ENCODE measurements at regions of chr2 and their contacts with region 1.

Region 1: DNA sequence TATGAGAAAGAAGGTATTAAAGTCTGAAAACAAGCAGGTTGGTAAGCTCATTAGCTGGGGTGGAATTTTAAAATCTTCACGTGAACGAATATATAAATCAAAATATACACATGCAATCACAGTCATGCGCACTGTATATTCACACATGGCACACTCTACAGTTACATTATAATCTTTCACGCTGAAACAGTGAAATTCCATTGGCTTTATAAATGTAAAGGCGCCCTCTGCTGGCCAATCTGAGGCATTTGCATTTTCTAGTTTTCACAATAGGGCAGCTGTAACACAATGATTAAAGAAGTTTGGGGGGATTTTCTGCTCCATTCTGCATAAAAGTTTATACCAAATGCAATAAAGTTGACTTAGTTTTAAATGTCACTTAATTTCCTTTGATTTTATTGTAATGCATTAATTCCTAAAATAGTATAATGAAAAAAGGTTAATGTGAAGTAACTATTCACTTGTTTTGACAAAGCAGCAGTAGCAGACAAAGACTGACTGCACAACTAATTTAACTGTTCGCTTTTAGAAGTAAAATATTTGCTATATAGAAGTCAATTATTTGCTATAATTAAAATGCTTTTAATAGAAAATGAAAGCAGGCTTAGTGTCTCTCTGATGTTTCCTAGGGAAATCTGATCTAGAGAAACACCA is 17.2 kb downstream of the IFIH1 start:
- DNase-seq: peak; percentile 25
- H3K4me3 Mint-ChIP-seq: no peak overlapping the region
- H3K27ac Mint-ChIP-seq: no peak overlapping the region
- H3K4me1 Mint-ChIP-seq: peaks cover 5% of the 10 kb centered on the region
- H3K27me3 Mint-ChIP-seq: no peaks in the 10 kb centered on the region

Region 2: GRCh38 chr2:161586517-161587167 is 714.6 kb before region 1 on chr2:
- intact Hi-C with region 1: loop called (anchors 1 kb)
- DNase-seq: no peak
- H3K4me3 Mint-ChIP-seq: no peak overlapping the region
- H3K27ac Mint-ChIP-seq: no peak overlapping the region
- H3K4me1 Mint-ChIP-seq: peaks cover 4% of the 10 kb centered on the region
- H3K27me3 Mint-ChIP-seq: peaks cover 26% of the 10 kb centered on the region

Region 3: DNA sequence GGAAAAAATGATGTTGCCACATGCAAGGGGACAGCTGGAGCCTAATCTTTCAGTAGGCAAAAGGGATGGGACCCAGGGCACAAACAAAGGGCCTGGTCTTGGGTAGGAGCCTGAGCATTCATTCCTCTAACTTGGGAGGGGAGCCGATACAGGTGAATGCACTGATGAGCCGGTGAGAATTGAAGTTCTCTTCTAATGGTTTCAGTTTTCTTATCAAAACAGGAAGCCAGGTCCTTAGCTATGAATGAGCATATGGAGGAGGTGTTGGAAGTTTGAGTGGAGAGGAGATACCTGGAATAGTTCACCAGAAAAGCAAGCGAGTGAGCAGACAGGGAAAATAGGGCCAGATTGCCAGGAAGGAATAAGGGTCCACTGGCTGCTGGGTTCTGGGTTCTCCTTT is 237.4 kb before region 1 on chr2:
- intact Hi-C with region 1: no loop called
- DNase-seq: no peak
- H3K4me3 Mint-ChIP-seq: peak overlapping the region; percentile 77
- H3K27ac Mint-ChIP-seq: peak overlapping the region; percentile 94
- H3K4me1 Mint-ChIP-seq: peaks cover 91% of the 10 kb centered on the region
- H3K27me3 Mint-ChIP-seq: no peaks in the 10 kb centered on the region

Region 4: DNA sequence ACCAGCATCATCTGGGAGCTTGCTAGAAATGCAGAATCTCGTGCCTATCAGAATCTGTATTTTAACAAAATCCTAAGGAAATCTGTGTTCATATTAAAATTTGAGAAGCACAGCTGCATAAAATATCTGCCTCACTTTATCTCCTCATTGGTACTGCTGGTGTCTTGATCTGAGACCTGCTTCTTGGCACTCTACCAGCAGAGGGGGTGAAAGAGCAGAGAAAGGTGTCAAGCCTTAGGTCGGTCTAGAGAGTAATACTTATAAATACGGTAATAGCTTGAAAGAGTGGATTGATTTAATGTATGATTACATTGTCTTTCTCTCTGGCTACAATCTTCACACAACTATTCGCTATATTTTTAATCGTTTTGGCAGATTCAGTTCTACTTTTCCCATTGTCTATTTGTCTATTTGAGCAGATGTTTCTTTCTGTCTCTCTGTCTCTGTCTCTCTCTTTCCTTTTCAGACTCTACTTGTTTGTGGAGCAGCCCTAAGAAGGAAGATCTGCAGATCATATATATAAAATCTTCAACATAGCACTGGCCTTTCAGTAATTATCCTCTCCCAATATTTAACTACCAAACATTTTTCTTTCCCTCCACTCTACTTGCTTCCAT is 147.6 kb before region 1 on chr2:
- intact Hi-C with region 1: loop called (anchors 1 kb)
- DNase-seq: peak; percentile 36
- H3K4me3 Mint-ChIP-seq: peak overlapping the region; percentile 28
- H3K27ac Mint-ChIP-seq: no peak overlapping the region
- H3K4me1 Mint-ChIP-seq: peaks cover 7% of the 10 kb centered on the region
- H3K27me3 Mint-ChIP-seq: peaks cover 37% of the 10 kb centered on the region

Region 5: GRCh38 chr2:162221064-162221463 is 80.2 kb before region 1 on chr2:
- intact Hi-C with region 1: loop called (anchors 1 kb)
- DNase-seq: peak; percentile 24
- H3K4me3 Mint-ChIP-seq: no peak overlapping the region
- H3K27ac Mint-ChIP-seq: no peak overlapping the region
- H3K4me1 Mint-ChIP-seq: no peaks in the 10 kb centered on the region
- H3K27me3 Mint-ChIP-seq: peaks cover 34% of the 10 kb centered on the region

Region 6: DNA sequence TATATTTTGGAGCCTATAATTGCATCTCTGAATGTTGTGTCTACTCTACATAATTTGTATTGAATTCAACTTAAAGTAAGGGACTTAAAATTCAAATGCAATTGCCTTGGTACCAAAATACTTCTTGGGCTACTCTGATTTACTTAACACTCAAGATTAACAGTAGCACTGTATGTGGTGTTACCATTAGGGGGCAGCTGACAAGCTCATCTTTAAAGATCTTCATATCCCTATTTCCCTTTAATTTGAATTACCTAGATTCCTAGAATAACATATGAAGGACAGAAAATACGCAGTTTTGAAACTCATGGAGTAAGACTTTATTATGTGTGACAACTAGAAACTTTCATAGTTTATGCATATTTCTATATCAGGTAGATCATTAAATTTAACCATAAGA is 20.6 kb before region 1 on chr2:
- intact Hi-C with region 1: no loop called
- DNase-seq: no peak
- H3K4me3 Mint-ChIP-seq: no peak overlapping the region
- H3K27ac Mint-ChIP-seq: no peak overlapping the region
- H3K4me1 Mint-ChIP-seq: peaks cover 10% of the 10 kb centered on the region
- H3K27me3 Mint-ChIP-seq: no peaks in the 10 kb centered on the region

Region 7: GRCh38 chr2:162312853-162313252 is 11.6 kb after region 1 on chr2:
- intact Hi-C with region 1: loop called (anchors 1 kb)
- DNase-seq: no peak
- H3K4me3 Mint-ChIP-seq: no peak overlapping the region
- H3K27ac Mint-ChIP-seq: no peak overlapping the region
- H3K4me1 Mint-ChIP-seq: peaks cover 74% of the 10 kb centered on the region
- H3K27me3 Mint-ChIP-seq: no peaks in the 10 kb centered on the region

Region 8: GRCh38 chr2:162343824-162344616 is 42.7 kb after region 1 on chr2 and contains the start of gene GCA:
- intact Hi-C with region 1: loop called (anchors 5 kb)
- DNase-seq: peak; percentile 97
- H3K4me3 Mint-ChIP-seq: peak within 1 kb of the TSS; percentile 94
- H3K27ac Mint-ChIP-seq: peak within 1 kb of the TSS; percentile 77
- H3K4me1 Mint-ChIP-seq: peaks cover 16% of the 10 kb centered on the region
- H3K27me3 Mint-ChIP-seq: peaks cover 19% of the 10 kb centered on the region
- total RNA-seq, gene GCA: 14.5 and 14.9 TPM in 2 replicates

Measured in activated T-helper 1 cell treated with anti-CD3 and anti-CD28 coated beads, Interleukin-12 subunit alpha, Interleukin-12 subunit beta, Interleukin-2, Interleukin-4 antibody, amounts not matched to agents 30 ng/mL and 10 ng/mL and 1 ng/mL, durations not matched to agents 14 hours and 24 hours and 36 hours (primary cell).